Heart right ventricle (tissue), 16 donors: ENCODE measurements at regions of chr14 and their contacts with region 1.

Region 1: GRCh38 chr14:49828640-49829039 is 23.9 kb downstream of the NEMF start:
- DNase-seq: no peak
- ATAC-seq: no peak
- H3K4me3 ChIP-seq: no peak overlapping the region
- H3K27ac ChIP-seq: no peak overlapping the region
- H3K4me1 ChIP-seq: no peaks in the 10 kb centered on the region
- H3K27me3 ChIP-seq: no peaks in the 10 kb centered on the region
- CTCF ChIP-seq: no peak

Region 2: GRCh38 chr14:49778421-49778820 is 50.2 kb before region 1 on chr14:
- intact Hi-C with region 1: loop called in 3 of 10 experiments (anchors 5 to 10 kb)
- DNase-seq: no peak
- ATAC-seq: no peak
- H3K4me3 ChIP-seq: no peak overlapping the region
- H3K27ac ChIP-seq: no peak overlapping the region
- H3K4me1 ChIP-seq: peaks cover 0 to 10% (median 0%) of the 10 kb centered on the region in 9 donors
- H3K27me3 ChIP-seq: no peaks in the 10 kb centered on the region
- CTCF ChIP-seq: no peak

Region 3: GRCh38 chr14:49786315-49787110 is 42.1 kb before region 1 on chr14:
- intact Hi-C with region 1: loop called in 1 of 10 experiments (anchors 5 kb)
- DNase-seq: no peak
- ATAC-seq: no peak
- H3K4me3 ChIP-seq: no peak overlapping the region
- H3K27ac ChIP-seq: no peak overlapping the region
- H3K4me1 ChIP-seq: no peaks in the 10 kb centered on the region
- H3K27me3 ChIP-seq: no peaks in the 10 kb centered on the region
- CTCF ChIP-seq: no peak

Region 4: DNA sequence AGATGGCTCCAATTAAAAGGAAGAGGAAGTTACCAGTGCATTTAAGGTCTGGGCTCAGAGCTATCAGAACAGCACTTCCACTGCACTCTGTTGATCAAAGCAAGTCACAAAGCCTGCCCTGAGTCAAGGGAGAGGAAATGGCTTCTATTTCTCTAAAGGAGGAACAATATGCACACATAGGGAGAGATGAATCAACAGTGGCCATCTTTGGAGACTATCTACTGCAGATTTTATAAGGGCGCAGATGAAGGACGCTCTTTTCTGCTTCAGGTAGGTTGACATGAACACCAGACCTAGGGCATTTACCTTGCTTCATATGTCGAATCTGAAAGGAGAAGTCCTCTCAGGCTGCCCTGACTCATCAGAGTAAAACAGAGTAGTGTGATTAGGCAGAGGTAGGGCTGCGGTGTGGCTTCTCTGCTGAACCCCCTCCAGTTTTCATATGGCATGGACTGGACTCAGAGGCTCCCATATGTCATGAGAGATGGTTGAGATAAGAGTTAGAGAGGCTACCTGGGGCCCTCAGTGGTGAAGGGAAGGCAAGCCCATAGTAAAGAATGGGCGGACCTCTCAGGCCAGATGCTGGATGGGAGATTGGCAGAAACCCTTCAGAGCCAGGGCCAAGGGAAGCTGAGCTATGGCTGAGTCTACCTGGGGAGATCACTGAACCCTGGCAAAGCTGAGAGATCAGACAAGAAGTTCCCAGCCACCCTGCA is 148.6 kb after region 1 on chr14:
- intact Hi-C with region 1: no loop called
- DNase-seq: no peak
- ATAC-seq: peak in 2 of 8 donors; percentile 36 to 39
- H3K4me3 ChIP-seq: no peak overlapping the region
- H3K27ac ChIP-seq: peak overlapping the region in 1 of 10 donors; percentile 85
- H3K4me1 ChIP-seq: peaks cover 0 to 66% (median 13%) of the 10 kb centered on the region in 9 donors
- H3K27me3 ChIP-seq: no peaks in the 10 kb centered on the region
- CTCF ChIP-seq: no peak